ENCODE measurements at regions of chr2 and their contacts with region 1.

Region 1: DNA sequence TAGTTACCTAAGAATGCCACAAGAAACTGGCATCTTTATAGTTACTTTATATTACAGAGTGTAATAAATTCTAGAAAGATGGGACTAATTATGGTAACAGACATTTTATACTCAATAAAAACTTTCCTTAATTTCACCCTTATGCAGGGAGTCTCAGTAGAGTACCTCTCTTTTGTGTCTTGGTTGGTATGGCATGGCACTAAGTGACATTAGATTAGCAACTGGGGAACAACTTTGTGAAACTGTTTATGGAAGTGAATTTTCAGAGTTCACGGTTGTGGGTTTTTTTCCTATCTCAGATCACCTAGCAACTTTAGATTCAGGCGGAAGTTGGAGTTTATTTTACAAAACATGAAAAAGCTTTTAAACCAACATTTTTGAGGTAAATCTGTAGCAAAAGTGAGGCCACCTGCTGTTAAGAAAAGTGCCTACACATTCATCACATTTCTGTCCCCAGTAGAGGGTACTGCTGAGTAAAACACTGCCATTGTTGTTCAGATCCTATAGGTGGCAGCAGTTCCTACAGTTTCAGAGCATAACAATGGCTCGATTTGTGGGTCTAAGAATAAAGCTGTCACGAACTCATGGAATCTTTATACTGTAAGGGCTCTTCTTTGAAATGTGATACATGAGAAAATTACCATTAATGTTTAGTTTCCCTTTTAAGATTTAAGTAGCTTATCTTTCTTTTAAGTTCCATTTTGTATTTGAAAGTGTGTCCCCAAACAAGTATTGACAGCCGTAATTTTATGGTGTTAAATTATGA is 117.6 kb downstream of the CAMKMT start:
- DNase-seq: peak; percentile 81
- H3K4me3 ChIP-seq: peak overlapping the region in 1 of 2 experiments; percentile 23; a peak in 1 of 4 replicates
- H3K27ac ChIP-seq: peak overlapping the region in 1 of 2 experiments; percentile 65; a peak in 2 of 4 replicates
- H3K4me1 ChIP-seq: peaks cover 0 to 12% of the 10 kb centered on the region in 2 experiments; a peak in 2 of 4 replicates
- H3K27me3 ChIP-seq: no peaks in the 10 kb centered on the region
- CTCF ChIP-seq: peak; percentile 100
- EP300 ChIP-seq: peak; percentile 15 to 49; a peak in 1 of 4 replicates
- RAD21 ChIP-seq: peak; percentile 100

Region 2: GRCh38 chr2:44420725-44421124 is 58.6 kb before region 1 on chr2:
- CTCF ChIA-PET with region 1: interaction called, 15 read pairs
- POLR2A ChIA-PET with region 1: no interaction called
- DNase-seq: no peak
- H3K4me3 ChIP-seq: no peak overlapping the region
- H3K27ac ChIP-seq: no peak overlapping the region
- H3K4me1 ChIP-seq: no peaks in the 10 kb centered on the region
- H3K27me3 ChIP-seq: no peaks in the 10 kb centered on the region
- CTCF ChIP-seq: no peak
- EP300 ChIP-seq: no peak
- RAD21 ChIP-seq: no peak

Region 3: DNA sequence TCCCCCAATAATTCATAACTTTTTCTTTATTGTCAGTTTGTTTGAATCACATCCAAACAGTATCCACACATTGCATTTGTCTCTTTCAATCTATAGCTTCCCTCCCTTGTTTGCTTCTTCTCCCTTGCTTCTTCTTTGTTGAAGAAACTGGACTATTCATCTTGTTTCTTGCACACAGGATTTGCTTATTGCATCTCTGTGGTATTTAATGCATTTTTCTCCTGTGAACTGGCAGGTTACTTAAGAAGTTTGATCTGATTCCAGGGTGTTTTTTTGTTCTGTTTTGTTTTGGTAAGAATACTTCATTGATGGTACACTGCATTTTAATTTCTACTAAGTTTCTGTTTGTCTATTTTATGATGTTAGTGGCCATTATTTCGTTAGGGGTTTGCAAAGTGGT is 49.3 kb after region 1 on chr2:
- CTCF ChIA-PET with region 1: interaction called, 20 read pairs
- POLR2A ChIA-PET with region 1: no interaction called
- DNase-seq: no peak
- H3K4me3 ChIP-seq: no peak overlapping the region
- H3K27ac ChIP-seq: peak overlapping the region; percentile 12 to 34; a peak in 2 of 4 replicates
- H3K4me1 ChIP-seq: peaks cover 14 to 22% of the 10 kb centered on the region in 2 experiments; a peak in 3 of 4 replicates
- H3K27me3 ChIP-seq: no peaks in the 10 kb centered on the region
- CTCF ChIP-seq: no peak
- EP300 ChIP-seq: peak; percentile 27 to 73; a peak in 2 of 4 replicates
- RAD21 ChIP-seq: no peak

Region 4: DNA sequence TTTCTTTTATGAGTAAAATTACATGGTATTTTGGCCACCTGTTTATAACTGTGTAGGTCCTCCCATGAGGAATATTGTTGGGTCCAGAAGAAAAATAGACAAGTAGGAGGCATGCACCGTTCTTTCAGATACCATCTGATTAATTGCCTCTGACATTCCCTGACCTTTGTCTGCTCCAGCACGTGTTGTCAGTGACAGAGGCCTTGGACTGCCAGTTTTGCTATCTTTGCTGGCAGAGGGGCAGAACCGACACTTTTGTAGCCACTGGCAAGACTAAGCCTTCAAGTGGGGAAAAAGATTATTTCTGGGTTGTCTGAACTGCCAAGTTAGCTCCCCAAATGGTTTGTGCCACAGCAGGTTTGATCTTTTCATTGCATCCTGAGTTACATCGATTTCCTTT is 159.3 kb after region 1 on chr2:
- CTCF ChIA-PET with region 1: interaction called, 45 read pairs
- POLR2A ChIA-PET with region 1: no interaction called
- DNase-seq: peak; percentile 55
- H3K4me3 ChIP-seq: no peak overlapping the region
- H3K27ac ChIP-seq: peak overlapping the region in 1 of 2 experiments; percentile 97; a peak in 2 of 4 replicates
- H3K4me1 ChIP-seq: peaks cover 0 to 30% of the 10 kb centered on the region in 2 experiments; a peak in 2 of 4 replicates
- H3K27me3 ChIP-seq: no peaks in the 10 kb centered on the region
- CTCF ChIP-seq: no peak
- EP300 ChIP-seq: peak in 1 of 2 experiments; percentile 87; a peak in 2 of 4 replicates
- RAD21 ChIP-seq: peak; percentile 39

Region 5: DNA sequence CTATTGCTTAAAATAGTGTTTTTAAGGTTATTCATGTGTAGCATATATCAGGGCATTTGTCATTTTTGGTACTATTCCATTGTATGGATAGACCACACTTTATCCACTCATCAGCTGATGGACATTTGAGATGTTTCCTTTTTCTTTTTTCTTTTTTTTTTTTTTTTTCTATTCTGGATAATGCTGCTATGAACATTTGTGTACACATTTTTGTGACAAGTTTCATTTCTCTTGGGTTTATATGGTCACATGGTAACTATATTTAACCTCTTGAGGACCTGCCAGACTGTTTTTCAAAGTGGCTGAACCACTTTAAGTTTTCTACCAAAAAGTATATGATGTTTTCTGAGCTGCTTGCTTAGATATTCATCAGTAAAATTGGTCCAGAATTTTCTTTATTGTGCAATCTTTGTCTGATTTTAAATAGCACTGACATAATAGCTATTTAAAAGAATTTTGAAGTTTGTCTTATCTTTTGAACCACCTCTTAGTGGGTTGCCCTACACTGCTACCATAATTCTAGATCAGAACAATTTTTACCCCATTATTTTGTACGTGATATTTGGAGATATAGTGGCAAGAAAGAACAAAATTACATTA is 242.8 kb after region 1 on chr2:
- CTCF ChIA-PET with region 1: interaction called, 75 read pairs
- POLR2A ChIA-PET with region 1: no interaction called
- DNase-seq: no peak
- H3K4me3 ChIP-seq: no peak overlapping the region
- H3K27ac ChIP-seq: no peak overlapping the region
- H3K4me1 ChIP-seq: no peaks in the 10 kb centered on the region; a peak in 2 of 4 replicates
- H3K27me3 ChIP-seq: no peaks in the 10 kb centered on the region
- CTCF ChIP-seq: no peak
- EP300 ChIP-seq: no peak
- RAD21 ChIP-seq: no peak

Region 6: DNA sequence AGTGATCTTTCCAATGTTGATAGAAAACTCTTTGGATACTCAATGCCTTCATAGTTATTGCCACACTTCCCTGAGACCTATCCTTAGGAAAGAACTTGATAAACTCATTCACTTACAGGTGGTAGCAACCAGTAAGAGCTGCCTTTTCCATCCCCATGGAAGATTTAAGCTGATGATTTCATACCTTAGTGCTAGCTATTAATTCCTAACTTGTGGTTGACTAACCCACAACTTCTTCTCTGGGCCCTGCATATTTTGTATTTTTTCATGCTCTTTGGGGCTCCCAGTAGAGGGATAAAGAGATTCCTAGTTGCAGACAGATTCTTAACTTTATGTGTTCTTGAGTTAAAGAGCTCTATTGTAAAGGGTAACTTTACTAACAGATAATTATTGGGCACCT is 437.0 kb after region 1 on chr2:
- CTCF ChIA-PET with region 1: interaction called, 19 read pairs
- POLR2A ChIA-PET with region 1: no interaction called
- DNase-seq: no peak
- H3K4me3 ChIP-seq: no peak overlapping the region
- H3K27ac ChIP-seq: no peak overlapping the region
- H3K4me1 ChIP-seq: peaks cover 0 to 2% of the 10 kb centered on the region in 2 experiments; a peak in 1 of 4 replicates
- H3K27me3 ChIP-seq: no peaks in the 10 kb centered on the region; the same call in 1 of the 2 replicates
- CTCF ChIP-seq: no peak
- EP300 ChIP-seq: no peak
- RAD21 ChIP-seq: no peak